ENCODE measurements at regions of chr19 and their contacts with region 1.

Region 1: DNA sequence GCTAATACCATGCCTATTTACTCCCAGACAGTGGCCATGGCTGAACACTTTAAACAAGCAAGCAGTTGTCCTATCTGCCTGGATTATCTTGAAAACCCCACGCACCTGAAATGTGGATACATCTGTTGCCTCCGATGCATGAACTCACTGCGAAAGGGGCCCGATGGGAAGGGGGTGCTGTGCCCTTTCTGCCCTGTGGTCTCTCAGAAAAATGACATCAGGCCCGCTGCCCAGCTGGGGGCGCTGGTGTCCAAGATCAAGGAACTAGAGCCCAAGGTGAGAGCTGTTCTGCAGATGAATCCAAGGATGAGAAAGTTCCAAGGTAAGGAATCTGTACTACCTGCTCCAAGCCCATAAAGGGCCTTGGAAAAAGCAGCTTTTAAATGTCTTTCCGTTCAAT is 8.6 kb downstream of the RFPL4AL1 start:
- DNase-seq: peak; percentile 68
- H3K4me3 ChIP-seq: no peak overlapping the region
- H3K27ac ChIP-seq: no peak overlapping the region
- H3K4me1 ChIP-seq: no peaks in the 10 kb centered on the region
- CTCF ChIP-seq: peak; percentile 93

Region 2: DNA sequence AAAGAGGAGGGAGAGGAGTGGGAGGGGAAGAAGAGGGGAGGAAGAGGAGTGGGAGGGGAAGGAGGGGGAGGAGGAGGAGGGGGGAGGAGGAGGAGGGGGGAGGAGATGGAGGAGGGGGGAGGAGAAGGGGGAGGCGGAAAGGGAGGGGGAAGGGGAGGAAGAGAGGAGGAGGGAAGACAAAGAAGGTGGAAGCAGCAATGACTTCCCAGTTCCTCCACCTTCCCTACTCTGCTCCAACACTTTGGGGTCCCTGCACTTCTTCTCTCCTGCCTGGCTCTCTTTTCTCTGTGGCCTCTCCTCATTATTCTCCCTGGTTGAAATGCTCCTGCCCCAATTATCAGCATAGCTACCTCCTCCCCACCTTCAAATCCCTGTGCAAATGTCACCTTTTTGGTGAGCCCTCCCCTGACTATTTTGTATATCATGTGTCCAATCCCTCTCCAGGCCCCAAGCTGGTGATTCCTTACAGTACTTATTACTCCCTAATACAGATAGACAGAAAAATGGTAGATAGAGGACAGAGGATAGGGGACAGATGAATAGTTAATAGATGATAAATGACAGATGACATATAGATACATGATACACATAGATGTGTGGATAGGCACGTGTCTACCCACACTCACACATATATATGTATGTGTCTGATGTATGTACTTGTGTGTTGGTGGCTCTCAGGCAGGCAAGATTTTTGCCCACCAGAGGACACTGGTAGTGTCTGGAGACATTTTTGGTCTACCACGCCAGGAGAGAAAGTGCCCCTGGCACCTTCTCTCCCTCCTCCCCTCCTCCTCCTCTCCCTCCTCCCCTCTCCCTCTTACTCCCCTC is 64.5 kb before region 1 on chr19:
- CTCF ChIA-PET with region 1: no interaction called
- POLR2A ChIA-PET with region 1: no interaction called
- intact Hi-C with region 1: no loop called
- DNase-seq: no peak
- H3K4me3 ChIP-seq: no peak overlapping the region
- H3K27ac ChIP-seq: no peak overlapping the region
- H3K4me1 ChIP-seq: no peaks in the 10 kb centered on the region
- CTCF ChIP-seq: no peak

Region 3: DNA sequence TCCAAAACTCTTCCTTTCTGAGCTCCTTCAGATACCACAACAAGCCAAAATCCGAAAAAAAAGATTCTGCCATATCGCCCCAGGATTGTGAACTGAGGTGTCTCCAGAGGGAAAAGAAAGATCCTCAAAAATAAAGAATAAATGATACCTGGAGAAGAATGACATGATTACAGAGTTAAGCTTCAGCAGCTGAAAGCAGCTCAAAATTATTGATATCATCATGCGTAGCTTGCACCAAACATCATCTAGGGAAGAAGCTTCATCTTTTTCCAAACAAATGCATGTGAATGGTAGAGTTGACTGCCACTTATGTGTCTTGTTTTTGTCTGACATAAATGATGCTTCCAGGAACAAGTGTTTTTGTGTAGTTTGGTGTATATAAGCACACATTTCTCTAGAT is 39.2 kb before region 1 on chr19 and contains the start of gene NLRP9:
- CTCF ChIA-PET with region 1: no interaction called
- POLR2A ChIA-PET with region 1: no interaction called
- intact Hi-C with region 1: no loop called
- DNase-seq: no peak
- H3K4me3 ChIP-seq: no peak within 1 kb of the TSS
- H3K27ac ChIP-seq: no peak within 1 kb of the TSS
- H3K4me1 ChIP-seq: peaks cover 12% of the 10 kb centered on the region
- CTCF ChIP-seq: no peak
- total RNA-seq, gene NLRP9: 0.21 TPM in 1 of 2 replicates, not detected in the other

Region 4: DNA sequence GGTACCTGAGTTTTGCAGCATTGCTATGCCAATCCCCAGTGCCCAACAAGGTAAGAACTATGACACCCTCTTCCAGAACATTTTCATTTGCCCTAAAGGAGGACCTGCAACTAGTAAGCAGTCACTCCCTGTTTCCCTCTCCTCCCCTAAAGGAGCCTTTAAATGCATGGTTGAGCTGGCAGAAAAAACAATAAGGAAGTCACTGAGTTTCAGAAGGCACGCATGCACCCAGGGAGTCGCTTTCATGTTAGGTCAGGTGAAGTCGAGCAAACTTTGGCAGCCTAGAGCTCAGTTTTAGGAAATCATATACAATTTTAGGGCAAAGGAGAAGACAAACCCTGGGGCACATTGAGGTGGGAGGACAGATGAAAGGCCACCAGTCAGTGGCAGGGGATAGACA is 42.5 kb after region 1 on chr19:
- CTCF ChIA-PET with region 1: no interaction called
- POLR2A ChIA-PET with region 1: no interaction called
- intact Hi-C with region 1: no loop called
- DNase-seq: peak; percentile 66
- H3K4me3 ChIP-seq: peak overlapping the region; percentile 62
- H3K27ac ChIP-seq: peak overlapping the region; percentile 90
- H3K4me1 ChIP-seq: peaks cover 70% of the 10 kb centered on the region
- CTCF ChIP-seq: no peak

Region 5: GRCh38 chr19:55898911-55899310 is 121.4 kb after region 1 on chr19:
- CTCF ChIA-PET with region 1: no interaction called
- POLR2A ChIA-PET with region 1: no interaction called
- intact Hi-C with region 1: no loop called
- DNase-seq: no peak
- H3K4me3 ChIP-seq: no peak overlapping the region
- H3K27ac ChIP-seq: no peak overlapping the region
- H3K4me1 ChIP-seq: no peaks in the 10 kb centered on the region
- CTCF ChIP-seq: no peak

Region 6: GRCh38 chr19:55947532-55947931 is 170.0 kb after region 1 on chr19 and contains the start of gene NLRP8:
- CTCF ChIA-PET with region 1: no interaction called
- POLR2A ChIA-PET with region 1: interaction called, 3 read pairs
- intact Hi-C with region 1: loop called (anchors 5 kb)
- DNase-seq: no peak
- H3K4me3 ChIP-seq: no peak within 1 kb of the TSS
- H3K27ac ChIP-seq: no peak within 1 kb of the TSS
- H3K4me1 ChIP-seq: peaks cover 14% of the 10 kb centered on the region
- CTCF ChIP-seq: no peak
- total RNA-seq, gene NLRP8: not detected in 2 replicates

Region 7: DNA sequence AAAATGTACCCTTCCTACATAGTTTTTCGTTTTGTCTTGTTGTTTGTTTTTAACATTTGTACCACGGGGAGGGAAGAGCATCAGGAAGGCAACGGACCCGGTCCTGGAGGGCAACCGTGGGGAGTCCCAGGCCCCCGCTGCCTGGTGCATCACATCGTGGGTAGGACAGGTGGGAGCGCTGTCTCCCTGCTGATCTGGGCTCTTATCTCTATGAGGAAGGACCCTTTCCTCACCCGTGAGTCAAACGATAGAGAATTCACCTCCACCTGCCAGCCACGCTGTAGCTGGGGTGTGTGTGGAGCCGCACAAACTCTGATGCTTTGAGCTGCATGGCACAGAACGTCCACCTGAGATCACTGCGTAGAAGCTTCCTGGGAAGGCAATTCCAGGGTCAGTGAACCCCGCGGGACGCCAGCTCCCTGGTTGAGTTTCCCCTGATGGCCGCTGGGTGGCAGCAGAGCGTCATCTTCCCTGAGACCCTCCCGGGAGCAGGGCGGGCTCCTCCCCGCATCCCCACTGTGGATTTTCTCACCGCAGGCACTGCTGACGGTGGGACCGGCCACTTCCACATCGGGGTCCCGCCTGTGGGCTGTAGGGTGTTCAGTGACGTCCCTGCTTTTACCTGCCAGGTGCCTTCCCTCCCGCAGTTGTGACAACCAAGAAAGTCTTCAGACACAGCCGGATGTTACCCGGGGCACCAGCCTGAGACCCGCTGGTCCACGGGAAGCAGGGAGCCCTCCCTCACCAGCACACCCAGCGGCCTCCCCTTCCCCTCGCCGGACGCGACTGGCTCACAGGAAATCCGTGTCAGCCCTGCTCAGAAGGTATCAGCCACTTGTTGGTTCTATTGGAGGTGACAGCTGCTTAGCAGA is 288.9 kb after region 1 on chr19:
- CTCF ChIA-PET with region 1: no interaction called
- POLR2A ChIA-PET with region 1: no interaction called
- intact Hi-C with region 1: loop called (anchors 2 kb)
- DNase-seq: peak; percentile 67
- H3K4me3 ChIP-seq: peak overlapping the region; percentile 51
- H3K27ac ChIP-seq: no peak overlapping the region
- H3K4me1 ChIP-seq: peaks cover 9% of the 10 kb centered on the region
- CTCF ChIP-seq: peak; percentile 93